Endothelial cell of umbilical vein (primary cell): ENCODE measurements at regions of chr2 and their contacts with region 1.

Region 1: GRCh38 chr2:24329700-24330099 is 30.6 kb downstream of the ITSN2 start:
- DNase-seq: peak; percentile 58
- H3K4me3 ChIP-seq: no peak overlapping the region
- H3K27ac ChIP-seq: no peak overlapping the region
- H3K4me1 ChIP-seq: peaks cover 33% of the 10 kb centered on the region
- H3K27me3 ChIP-seq: no peaks in the 10 kb centered on the region
- CTCF ChIP-seq: no peak
- POLR2A ChIP-seq: no peak

Region 2: GRCh38 chr2:24315669-24316068 is 14.0 kb before region 1 on chr2:
- CTCF ChIA-PET with region 1: interaction called, 3 read pairs
- POLR2A ChIA-PET with region 1: no interaction called
- dilution Hi-C with region 1: no loop called
- intact Hi-C with region 1: loop called (anchors 2 kb)
- DNase-seq: no peak
- H3K4me3 ChIP-seq: no peak overlapping the region
- H3K27ac ChIP-seq: no peak overlapping the region
- H3K4me1 ChIP-seq: peaks cover 3% of the 10 kb centered on the region
- H3K27me3 ChIP-seq: no peaks in the 10 kb centered on the region
- CTCF ChIP-seq: no peak
- POLR2A ChIP-seq: no peak